ENCODE measurements at regions of chr1 and their contacts with region 1.

Region 1: GRCh38 chr1:75632350-75632949 is 21.5 kb upstream of the SLC44A5 start:
- DNase-seq: no peak
- H3K4me3 ChIP-seq: no peak overlapping the region
- H3K27ac ChIP-seq: no peak overlapping the region
- H3K4me1 ChIP-seq: no peaks in the 10 kb centered on the region
- H3K27me3 ChIP-seq: no peaks in the 10 kb centered on the region
- CTCF ChIP-seq: peak; percentile 87

Region 2: DNA sequence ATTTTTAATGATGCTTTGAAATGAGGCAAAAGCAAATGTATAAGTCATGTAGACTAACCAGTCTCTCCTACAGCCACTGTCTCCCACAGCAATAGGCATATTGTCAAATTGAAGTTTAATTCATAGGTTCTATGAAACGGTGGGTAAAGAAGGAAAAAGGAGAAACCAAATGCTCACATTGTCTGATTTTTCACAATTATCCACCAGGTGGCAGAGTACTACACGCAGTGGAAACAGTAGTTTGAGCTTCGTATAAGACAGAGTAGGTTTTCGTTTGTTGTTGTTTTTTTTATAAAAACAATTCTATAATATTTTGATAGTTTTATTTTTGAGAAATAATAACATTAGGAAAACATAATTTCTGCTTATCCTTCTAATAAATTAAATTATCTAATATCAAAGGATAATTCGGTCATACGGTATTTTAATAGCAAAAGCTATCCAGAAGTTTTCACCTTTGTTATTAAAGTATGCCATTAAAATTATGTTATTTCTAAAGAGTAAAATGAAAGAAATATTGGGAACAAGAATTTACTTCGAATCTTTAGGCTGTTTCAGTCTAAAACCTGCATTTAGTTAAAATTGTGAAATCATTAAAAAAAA is 860.4 kb before region 1 on chr1:
- CTCF ChIA-PET with region 1: no interaction called
- POLR2A ChIA-PET with region 1: no interaction called
- intact Hi-C with region 1: loop called (anchors 2 kb)
- DNase-seq: peak in 1 of 2 experiments; percentile 41
- H3K4me3 ChIP-seq: no peak overlapping the region
- H3K27ac ChIP-seq: no peak overlapping the region
- H3K4me1 ChIP-seq: no peaks in the 10 kb centered on the region
- H3K27me3 ChIP-seq: no peaks in the 10 kb centered on the region
- CTCF ChIP-seq: peak; percentile 83

Region 3: DNA sequence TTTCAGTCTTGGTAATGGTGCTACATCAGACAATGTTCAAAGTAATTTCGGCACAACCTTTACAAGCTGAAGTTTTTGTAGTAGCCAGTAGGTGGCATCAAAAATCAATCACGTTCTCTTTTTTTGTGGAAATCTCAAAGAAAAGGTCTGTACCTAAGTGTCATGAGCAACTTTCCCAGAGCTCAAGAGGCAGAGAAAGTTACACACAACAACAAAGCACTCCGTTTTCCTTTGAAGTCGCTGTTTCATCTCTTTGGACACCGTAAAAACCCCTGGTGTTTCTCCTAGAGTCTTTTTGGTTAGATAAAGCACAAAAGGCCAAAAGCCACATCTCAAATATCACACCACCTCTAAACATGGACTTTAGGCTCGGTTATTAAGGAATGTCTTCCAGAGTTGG is 366.7 kb before region 1 on chr1:
- CTCF ChIA-PET with region 1: interaction called, 3 read pairs
- POLR2A ChIA-PET with region 1: no interaction called
- intact Hi-C with region 1: loop called (anchors 5 kb)
- DNase-seq: no peak
- H3K4me3 ChIP-seq: no peak overlapping the region
- H3K27ac ChIP-seq: no peak overlapping the region
- H3K4me1 ChIP-seq: no peaks in the 10 kb centered on the region
- H3K27me3 ChIP-seq: no peaks in the 10 kb centered on the region
- CTCF ChIP-seq: peak; percentile 86

Measured in PC-9 (cell line).